CD4-positive, alpha-beta T cell (primary cell): ENCODE measurements at regions of chr9 and their contacts with region 1.

Region 1: GRCh38 chr9:2066312-2067273 is 51.4 kb downstream of the SMARCA2 start:
- DNase-seq: peak in 4 of 14 experiments; percentile 7 to 59 (median 50)
- ATAC-seq: peak; percentile 87
- H3K4me3 ChIP-seq: no peak overlapping the region
- H3K4me3 Mint-ChIP-seq: no peak overlapping the region
- H3K27ac ChIP-seq: no peak overlapping the region
- H3K27ac Mint-ChIP-seq: peak overlapping the region; percentile 79
- H3K4me1 ChIP-seq: no peaks in the 10 kb centered on the region
- H3K4me1 Mint-ChIP-seq: peaks cover 24% of the 10 kb centered on the region
- H3K27me3 ChIP-seq: no peaks in the 10 kb centered on the region
- H3K27me3 Mint-ChIP-seq: no peaks in the 10 kb centered on the region
- CTCF ChIP-seq: peak; percentile 63

Region 2: DNA sequence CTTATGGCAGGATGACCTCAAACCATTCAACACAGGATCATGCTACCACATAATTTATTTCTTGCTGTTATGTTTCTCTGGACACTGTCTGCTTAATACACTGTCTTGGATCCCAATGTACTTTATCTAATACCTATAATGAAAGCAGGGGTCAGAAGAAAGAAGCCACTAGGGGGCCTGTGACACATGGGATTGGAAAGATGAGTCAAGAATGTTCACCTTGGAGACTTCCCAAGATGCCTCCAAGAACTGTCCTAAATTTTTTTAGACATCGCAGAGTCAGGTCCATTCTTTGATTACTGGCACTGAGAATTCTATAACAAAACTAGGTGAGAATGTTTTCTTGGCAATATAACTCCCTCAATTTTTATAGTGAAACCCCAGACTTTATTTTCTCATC is 357.2 kb before region 1 on chr9:
- CTCF ChIA-PET with region 1: no interaction called
- POLR2A ChIA-PET with region 1: no interaction called
- intact Hi-C with region 1: loop called (anchors 5 kb)
- DNase-seq: peak in 4 of 14 experiments; percentile 4 to 27 (median 20)
- ATAC-seq: no peak
- H3K4me3 ChIP-seq: no peak overlapping the region
- H3K4me3 Mint-ChIP-seq: no peak overlapping the region
- H3K27ac ChIP-seq: no peak overlapping the region
- H3K27ac Mint-ChIP-seq: no peak overlapping the region
- H3K4me1 ChIP-seq: no peaks in the 10 kb centered on the region
- H3K4me1 Mint-ChIP-seq: no peaks in the 10 kb centered on the region
- H3K27me3 ChIP-seq: peaks cover 0 to 5% of the 10 kb centered on the region in 2 experiments
- H3K27me3 Mint-ChIP-seq: peaks cover 35% of the 10 kb centered on the region
- CTCF ChIP-seq: peak; percentile 30

Region 3: DNA sequence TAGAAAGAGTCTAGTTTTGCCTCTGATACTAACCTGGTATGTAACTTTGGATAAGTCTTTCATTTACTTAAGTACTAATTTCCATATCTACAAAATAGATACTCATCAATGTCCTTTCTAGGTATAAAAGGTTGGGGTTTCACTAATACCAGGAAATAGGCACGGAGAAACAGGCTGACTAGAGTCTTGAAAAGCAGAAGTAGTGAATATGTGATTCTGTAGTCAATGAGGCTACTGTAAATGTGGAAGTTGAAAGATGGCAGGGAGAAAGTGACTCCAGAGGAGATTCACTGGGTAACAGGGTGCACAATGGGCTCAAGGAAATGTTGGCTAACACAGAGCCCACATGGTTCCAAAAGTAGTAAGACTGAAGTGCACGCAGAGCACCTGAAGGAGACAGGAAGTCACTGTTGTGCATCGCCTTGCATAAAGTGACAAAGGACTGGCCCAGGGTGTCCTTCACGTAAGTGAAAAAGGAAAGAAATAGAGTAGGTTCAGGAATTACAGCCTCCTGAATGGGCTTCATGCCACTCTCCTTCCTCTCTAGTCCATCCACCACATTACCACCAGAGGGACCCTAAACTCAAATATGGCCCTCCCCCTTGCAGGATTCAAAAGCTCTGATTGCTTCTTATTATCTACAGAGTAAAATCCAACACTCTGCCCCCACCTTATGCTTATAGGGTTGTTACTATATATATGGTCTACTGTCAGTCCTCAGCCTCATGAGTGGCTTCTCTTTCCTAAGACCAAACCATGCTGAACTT is 339.4 kb before region 1 on chr9:
- CTCF ChIA-PET with region 1: interaction called, 3 read pairs
- POLR2A ChIA-PET with region 1: no interaction called
- intact Hi-C with region 1: loop called in 1 of 2 experiments (anchors 1 kb)
- DNase-seq: peak in 4 of 14 experiments; percentile 5 to 39 (median 28)
- ATAC-seq: no peak
- H3K4me3 ChIP-seq: no peak overlapping the region
- H3K4me3 Mint-ChIP-seq: no peak overlapping the region
- H3K27ac ChIP-seq: no peak overlapping the region
- H3K27ac Mint-ChIP-seq: no peak overlapping the region
- H3K4me1 ChIP-seq: no peaks in the 10 kb centered on the region
- H3K4me1 Mint-ChIP-seq: no peaks in the 10 kb centered on the region
- H3K27me3 ChIP-seq: no peaks in the 10 kb centered on the region
- H3K27me3 Mint-ChIP-seq: peaks cover 32% of the 10 kb centered on the region
- CTCF ChIP-seq: no peak

Region 4: GRCh38 chr9:1939926-1940368 is 126.6 kb before region 1 on chr9:
- CTCF ChIA-PET with region 1: no interaction called
- POLR2A ChIA-PET with region 1: no interaction called
- intact Hi-C with region 1: loop called in 1 of 2 experiments (anchors 5 kb)
- DNase-seq: peak in 8 of 14 experiments; percentile 3 to 58 (median 27)
- ATAC-seq: peak; percentile 58
- H3K4me3 ChIP-seq: no peak overlapping the region
- H3K4me3 Mint-ChIP-seq: no peak overlapping the region
- H3K27ac ChIP-seq: no peak overlapping the region
- H3K27ac Mint-ChIP-seq: no peak overlapping the region
- H3K4me1 ChIP-seq: no peaks in the 10 kb centered on the region
- H3K4me1 Mint-ChIP-seq: no peaks in the 10 kb centered on the region
- H3K27me3 ChIP-seq: no peaks in the 10 kb centered on the region
- H3K27me3 Mint-ChIP-seq: no peaks in the 10 kb centered on the region
- CTCF ChIP-seq: peak; percentile 60

Region 5: DNA sequence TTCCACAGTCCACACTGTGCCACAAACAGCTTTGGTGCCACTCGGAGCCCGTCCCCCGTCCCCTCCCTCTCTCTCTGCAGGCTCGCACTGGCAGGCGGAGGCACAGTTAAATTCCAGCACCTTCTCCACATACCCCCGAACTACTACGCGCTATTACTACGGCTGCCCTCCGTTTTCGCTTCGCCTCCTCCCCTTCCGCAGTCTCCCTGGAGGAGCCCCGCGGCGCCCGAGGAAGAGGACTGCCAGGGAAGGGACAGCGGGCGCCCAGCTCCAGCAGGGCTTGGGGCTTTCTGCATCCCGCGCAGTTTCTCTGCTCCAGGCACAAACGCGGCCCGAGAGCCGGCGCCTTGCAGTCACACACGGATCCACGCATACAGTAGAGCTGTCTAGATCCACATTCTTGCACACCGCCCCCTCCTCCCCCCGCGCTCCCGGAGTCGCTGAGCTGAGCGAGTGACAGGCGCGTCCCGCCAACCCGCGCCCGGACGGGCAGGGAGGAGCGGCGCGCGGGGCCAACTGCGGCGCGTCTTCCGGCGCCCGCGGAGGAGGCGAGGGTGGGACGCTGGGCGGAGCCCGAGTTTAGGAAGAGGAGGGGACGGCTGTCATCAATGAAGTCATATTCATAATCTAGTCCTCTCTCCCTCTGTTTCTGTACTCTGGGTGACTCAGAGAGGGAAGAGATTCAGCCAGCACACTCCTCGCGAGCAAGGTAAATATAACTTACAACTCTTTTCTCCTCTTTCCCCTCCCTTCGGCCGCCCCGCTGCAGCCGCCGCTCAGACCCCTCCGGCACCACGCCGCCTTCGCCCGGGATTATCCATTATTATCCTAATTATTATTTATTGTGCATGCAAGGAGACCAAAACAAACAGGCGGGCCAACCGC is 51.7 kb before region 1 on chr9 and contains the start of gene SMARCA2:
- CTCF ChIA-PET with region 1: interaction called, 4 read pairs
- POLR2A ChIA-PET with region 1: interaction called, 9 read pairs
- intact Hi-C with region 1: loop called in 1 of 2 experiments (anchors 5 kb)
- DNase-seq: peak; percentile 94 to 99 (median 97)
- ATAC-seq: peak; percentile 77
- H3K4me3 ChIP-seq: peak within 1 kb of the TSS; percentile 84
- H3K4me3 Mint-ChIP-seq: peak within 1 kb of the TSS; percentile 100
- H3K27ac ChIP-seq: peak within 1 kb of the TSS; percentile 87 to 91
- H3K27ac Mint-ChIP-seq: peak within 1 kb of the TSS; percentile 99
- H3K4me1 ChIP-seq: peaks cover 12% of the 10 kb centered on the region
- H3K4me1 Mint-ChIP-seq: peaks cover 38% of the 10 kb centered on the region
- H3K27me3 ChIP-seq: no peaks in the 10 kb centered on the region
- H3K27me3 Mint-ChIP-seq: peaks cover 9% of the 10 kb centered on the region
- CTCF ChIP-seq: no peak
- total RNA-seq, gene SMARCA2: 268 to 272 TPM

Region 6: GRCh38 chr9:2053883-2054845 is 12.4 kb before region 1 on chr9:
- CTCF ChIA-PET with region 1: interaction called, 3 read pairs
- POLR2A ChIA-PET with region 1: interaction called, 19 read pairs
- intact Hi-C with region 1: no loop called
- DNase-seq: peak; percentile 53 to 92 (median 59)
- ATAC-seq: peak; percentile 95
- H3K4me3 ChIP-seq: no peak overlapping the region
- H3K4me3 Mint-ChIP-seq: peak overlapping the region; percentile 71
- H3K27ac ChIP-seq: peak overlapping the region; percentile 55 to 73
- H3K27ac Mint-ChIP-seq: peak overlapping the region; percentile 97
- H3K4me1 ChIP-seq: peaks cover 20% of the 10 kb centered on the region
- H3K4me1 Mint-ChIP-seq: peaks cover 77% of the 10 kb centered on the region
- H3K27me3 ChIP-seq: no peaks in the 10 kb centered on the region
- H3K27me3 Mint-ChIP-seq: no peaks in the 10 kb centered on the region
- CTCF ChIP-seq: peak; percentile 14